Transverse colon (tissue), 4 donors: ENCODE measurements at regions of chr15 and their contacts with region 1.

Region 1: DNA sequence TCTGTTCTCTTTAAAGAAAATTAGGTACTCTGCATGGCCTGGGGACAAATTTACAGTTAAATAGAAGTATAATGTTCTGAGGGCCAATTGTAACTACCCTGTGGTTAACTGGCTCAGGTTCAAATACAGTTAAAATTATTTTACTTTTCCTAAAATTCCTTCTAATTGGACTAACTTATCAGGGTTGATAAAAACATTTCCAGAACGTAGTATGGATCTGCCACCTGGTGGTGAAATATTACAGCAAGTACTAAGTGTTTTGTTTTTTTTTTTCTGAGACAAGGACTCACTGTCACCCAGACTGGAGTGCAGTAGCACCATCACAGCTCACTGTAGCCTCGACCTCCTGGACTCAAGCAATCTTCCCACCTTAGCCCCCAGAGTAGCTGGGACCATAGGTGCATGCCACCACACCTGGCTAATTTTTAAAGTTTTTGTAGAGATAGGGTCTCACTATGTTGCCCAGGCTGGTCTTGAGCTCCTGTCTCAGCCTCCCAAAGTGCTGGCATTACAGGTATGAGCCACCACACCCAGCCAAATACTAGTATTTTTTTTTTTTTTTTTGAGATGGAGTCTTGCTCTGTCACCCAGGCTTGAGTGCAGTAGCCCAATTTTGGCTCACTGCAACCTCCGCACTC is 29.2 kb downstream of the NEO1 start:
- DNase-seq: no peak
- H3K4me3 ChIP-seq: no peak overlapping the region
- H3K27ac ChIP-seq: no peak overlapping the region
- H3K4me1 ChIP-seq: peaks cover 10 to 69% (median 34%) of the 10 kb centered on the region in 4 donors
- H3K27me3 ChIP-seq: no peaks in the 10 kb centered on the region
- CTCF ChIP-seq: peak; percentile 68 to 74 (median 71)
- EP300 ChIP-seq: no peak
- POLR2A ChIP-seq: no peak

Region 2: GRCh38 chr15:72796515-72797337 is 284.7 kb before region 1 on chr15:
- in situ Hi-C with region 1: loop called (anchors 5 to 10 kb)
- intact Hi-C with region 1: loop called (anchors 1 kb)
- DNase-seq: peak; percentile 54
- H3K4me3 ChIP-seq: peak overlapping the region; percentile 26 to 58 (median 43)
- H3K27ac ChIP-seq: peak overlapping the region in 2 of 4 donors; percentile 33 to 50
- H3K4me1 ChIP-seq: peaks cover 3 to 14% (median 11%) of the 10 kb centered on the region in 4 donors
- H3K27me3 ChIP-seq: no peaks in the 10 kb centered on the region
- CTCF ChIP-seq: peak; percentile 15 to 67 (median 43)
- EP300 ChIP-seq: no peak
- POLR2A ChIP-seq: no peak